ENCODE measurements at regions of chr9 and their contacts with region 1.

Region 1: GRCh38 chr9:33414914-33415500 is 12.6 kb upstream of the AQP7 start:
- H3K4me3 Mint-ChIP-seq: no peak overlapping the region
- H3K27ac Mint-ChIP-seq: peak overlapping the region; percentile 16
- H3K4me1 Mint-ChIP-seq: peaks cover 12% of the 10 kb centered on the region
- H3K27me3 Mint-ChIP-seq: peaks cover 14% of the 10 kb centered on the region

Region 2: DNA sequence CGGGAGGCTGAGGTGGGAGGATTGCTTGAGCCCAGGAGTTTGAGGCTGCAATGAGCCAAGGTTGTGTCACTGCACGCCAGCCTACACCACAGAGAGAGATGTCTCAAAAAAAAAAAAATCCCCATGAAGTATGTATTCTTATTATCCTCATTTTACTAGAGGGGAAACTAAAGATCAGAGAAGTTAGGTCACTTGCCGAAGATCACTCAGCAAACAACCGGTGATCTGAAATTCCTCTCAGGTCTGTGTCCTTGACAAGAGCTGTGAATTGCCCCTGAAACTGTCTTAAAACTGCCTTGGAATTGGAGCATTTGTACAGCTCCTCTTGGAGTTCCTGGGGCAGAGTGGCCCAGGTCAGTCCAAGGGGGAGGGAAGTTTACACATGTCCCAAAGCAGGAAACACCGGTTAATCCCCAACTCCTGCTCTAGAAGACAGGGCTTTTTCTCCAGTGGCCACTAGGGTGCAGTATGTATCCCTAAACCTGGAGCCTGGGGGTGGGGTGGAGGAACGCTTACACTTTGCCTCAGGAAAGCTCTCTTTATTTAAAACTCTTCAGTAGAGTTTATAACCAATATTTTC is 40.3 kb before region 1 on chr9:
- intact Hi-C with region 1: no loop called
- H3K4me3 Mint-ChIP-seq: no peak overlapping the region
- H3K27ac Mint-ChIP-seq: peak overlapping the region; percentile 23
- H3K4me1 Mint-ChIP-seq: peaks cover 14% of the 10 kb centered on the region
- H3K27me3 Mint-ChIP-seq: no peaks in the 10 kb centered on the region

Region 3: DNA sequence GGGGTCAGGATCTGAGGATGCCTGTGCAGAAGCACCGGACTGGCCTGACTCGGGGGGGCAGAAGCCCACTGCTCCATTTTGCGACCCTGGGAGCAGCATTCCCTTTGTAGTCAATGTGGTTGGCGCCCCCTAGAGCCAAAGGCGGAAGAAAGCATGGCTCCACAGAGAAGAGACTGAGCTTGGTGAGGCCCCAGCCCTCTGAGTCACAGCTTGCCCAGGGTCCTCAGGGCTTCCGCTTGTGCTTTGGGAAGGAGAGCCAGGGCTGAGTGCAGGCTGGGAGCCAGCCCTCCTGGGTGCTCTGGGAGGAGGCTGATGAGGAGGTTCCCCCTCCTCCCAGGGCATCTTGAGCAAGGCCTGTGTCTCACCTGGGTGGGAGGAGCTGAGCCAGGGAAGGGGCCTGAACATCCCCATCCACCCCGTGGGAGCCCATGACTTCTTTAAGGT is 37.8 kb after region 1 on chr9:
- intact Hi-C with region 1: loop called (anchors 5 kb)
- H3K4me3 Mint-ChIP-seq: no peak overlapping the region
- H3K27ac Mint-ChIP-seq: peak overlapping the region; percentile 37
- H3K4me1 Mint-ChIP-seq: peaks cover 28% of the 10 kb centered on the region
- H3K27me3 Mint-ChIP-seq: peaks cover 10% of the 10 kb centered on the region